ENCODE measurements at regions of chr2 and their contacts with region 1.

Region 1: GRCh38 chr2:180980106-180980942 is at the start of gene UBE2E3:
- DNase-seq: peak; percentile 83
- ATAC-seq: peak; percentile 85
- H3K4me3 Mint-ChIP-seq: peak within 1 kb of the TSS; percentile 98
- H3K27ac Mint-ChIP-seq: peak within 1 kb of the TSS; percentile 93
- H3K4me1 Mint-ChIP-seq: peaks cover 40% of the 10 kb centered on the region
- H3K27me3 Mint-ChIP-seq: peaks cover 36% of the 10 kb centered on the region
- total RNA-seq, gene UBE2E3: 28.4 to 36.7 TPM

Region 2: DNA sequence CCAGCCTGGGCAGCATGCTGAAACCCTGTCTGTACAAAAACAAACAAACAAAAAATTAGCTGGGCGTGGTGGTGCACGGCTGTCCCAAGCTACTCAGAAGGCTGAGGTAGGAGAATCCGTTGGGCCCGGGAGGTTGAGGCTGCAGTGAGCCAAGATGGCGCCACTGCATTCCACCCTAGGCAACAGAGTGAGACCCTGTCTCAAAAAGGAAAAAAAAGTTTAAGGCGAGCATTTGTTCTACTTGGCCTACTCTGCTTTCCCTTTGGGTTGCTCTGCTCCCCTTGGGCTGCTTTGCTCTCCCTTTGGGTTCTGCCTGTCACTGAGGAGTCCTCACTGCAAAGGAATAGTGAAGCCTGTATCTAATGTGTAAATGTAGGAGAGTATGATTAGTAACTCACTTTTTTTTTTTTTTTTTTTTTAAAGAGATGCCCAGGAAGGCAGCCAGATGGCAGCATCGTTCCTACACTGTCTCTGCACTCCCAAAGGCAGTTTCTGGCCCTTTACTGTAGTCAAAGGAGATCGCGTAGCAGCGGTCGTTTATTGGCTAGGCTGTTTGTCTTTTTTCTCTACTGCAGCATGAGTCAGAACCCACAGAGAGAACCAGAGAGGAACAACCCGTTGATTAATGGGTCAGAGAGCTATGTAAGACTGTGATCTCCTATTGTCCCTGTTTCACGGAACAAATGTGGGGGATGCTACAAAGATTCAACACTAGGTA is 854.9 kb before region 1 on chr2:
- CTCF ChIA-PET with region 1: interaction called, 13 read pairs
- POLR2A ChIA-PET with region 1: no interaction called
- DNase-seq: peak; percentile 35
- ATAC-seq: peak; percentile 58
- H3K4me3 Mint-ChIP-seq: no peak overlapping the region
- H3K27ac Mint-ChIP-seq: no peak overlapping the region
- H3K4me1 Mint-ChIP-seq: no peaks in the 10 kb centered on the region
- H3K27me3 Mint-ChIP-seq: peaks cover 20% of the 10 kb centered on the region

Region 3: GRCh38 chr2:180901331-180901730 is 79.0 kb before region 1 on chr2:
- CTCF ChIA-PET with region 1: no interaction called
- POLR2A ChIA-PET with region 1: no interaction called
- DNase-seq: no peak
- ATAC-seq: no peak
- H3K4me3 Mint-ChIP-seq: no peak overlapping the region
- H3K27ac Mint-ChIP-seq: no peak overlapping the region
- H3K4me1 Mint-ChIP-seq: no peaks in the 10 kb centered on the region
- H3K27me3 Mint-ChIP-seq: peaks cover 15% of the 10 kb centered on the region

Region 4: GRCh38 chr2:180970016-180970415 is 10.3 kb before region 1 on chr2:
- CTCF ChIA-PET with region 1: interaction called, 26 read pairs
- POLR2A ChIA-PET with region 1: interaction called, 3 read pairs
- DNase-seq: no peak
- ATAC-seq: no peak
- H3K4me3 Mint-ChIP-seq: no peak overlapping the region
- H3K27ac Mint-ChIP-seq: no peak overlapping the region
- H3K4me1 Mint-ChIP-seq: no peaks in the 10 kb centered on the region
- H3K27me3 Mint-ChIP-seq: peaks cover 19% of the 10 kb centered on the region

Region 5: GRCh38 chr2:180991820-180992219 is 11.5 kb after region 1 on chr2:
- CTCF ChIA-PET with region 1: interaction called, 32 read pairs
- POLR2A ChIA-PET with region 1: no interaction called
- DNase-seq: no peak
- ATAC-seq: no peak
- H3K4me3 Mint-ChIP-seq: no peak overlapping the region
- H3K27ac Mint-ChIP-seq: no peak overlapping the region
- H3K4me1 Mint-ChIP-seq: peaks cover 8% of the 10 kb centered on the region
- H3K27me3 Mint-ChIP-seq: no peaks in the 10 kb centered on the region

Region 6: DNA sequence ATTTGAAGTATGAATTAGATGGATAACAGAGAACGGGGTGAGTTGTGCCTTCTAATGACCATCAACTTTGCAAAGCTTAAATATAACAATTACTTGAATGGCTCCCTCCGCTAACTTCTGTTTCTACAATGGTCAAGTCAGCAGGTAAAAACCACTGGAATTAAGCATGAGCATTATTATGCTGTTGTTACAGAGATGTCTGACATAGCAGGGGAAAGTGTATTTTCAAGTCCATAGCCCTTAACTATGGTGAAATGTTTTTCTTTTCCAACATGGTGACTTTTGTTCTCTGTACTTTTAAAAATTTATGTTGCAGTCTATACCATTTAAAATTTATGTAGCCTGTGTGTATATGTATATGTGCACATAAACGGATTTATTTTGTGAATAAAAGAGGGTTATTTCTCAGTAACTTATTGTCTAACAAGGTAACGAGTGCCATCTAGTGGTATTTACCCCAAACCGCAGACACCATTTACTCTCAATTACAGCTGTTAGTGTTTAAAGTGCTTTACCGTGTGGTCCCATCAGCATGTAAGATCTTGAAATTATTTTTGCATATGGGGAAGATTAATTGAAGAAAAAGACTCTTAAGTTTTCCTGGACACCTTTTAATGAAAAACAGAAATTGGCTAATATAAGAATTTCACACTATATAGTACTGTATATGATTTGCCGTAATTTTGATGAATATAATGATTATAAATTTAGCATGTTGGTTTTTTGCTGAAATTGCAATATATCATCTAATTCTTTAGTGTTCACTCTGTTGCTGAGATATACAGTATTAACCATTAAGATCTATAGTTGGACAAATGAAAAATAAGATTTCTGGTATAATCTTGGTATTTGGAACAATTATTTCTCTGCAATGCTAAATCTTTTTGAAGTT is 78.3 kb after region 1 on chr2:
- CTCF ChIA-PET with region 1: interaction called, 14 read pairs
- POLR2A ChIA-PET with region 1: no interaction called
- DNase-seq: peak; percentile 58
- ATAC-seq: peak; percentile 49
- H3K4me3 Mint-ChIP-seq: no peak overlapping the region
- H3K27ac Mint-ChIP-seq: no peak overlapping the region
- H3K4me1 Mint-ChIP-seq: no peaks in the 10 kb centered on the region
- H3K27me3 Mint-ChIP-seq: no peaks in the 10 kb centered on the region

Measured in activated CD8-positive, alpha-beta T cell treated with anti-CD3 and anti-CD28 coated beads, Interleukin-2, amount 10 ng/mL, durations not matched to agents 7 days and 5 days (primary cell).